ENCODE measurements at regions of chr3 and their contacts with region 1.

Region 1: GRCh38 chr3:46488735-46489361 is 8.9 kb upstream of the RTP3 start:
- DNase-seq: peak; percentile 97
- ATAC-seq: peak; percentile 99
- H3K4me3 Mint-ChIP-seq: peak overlapping the region; percentile 29
- H3K27ac Mint-ChIP-seq: peak overlapping the region; percentile 57
- H3K4me1 Mint-ChIP-seq: peaks cover 25% of the 10 kb centered on the region
- H3K27me3 Mint-ChIP-seq: peaks cover 20% of the 10 kb centered on the region

Region 2: GRCh38 chr3:46386206-46386605 is 102.6 kb before region 1 on chr3:
- CTCF ChIA-PET with region 1: interaction called, 14 read pairs
- DNase-seq: no peak
- ATAC-seq: peak; percentile 39
- H3K4me3 Mint-ChIP-seq: no peak overlapping the region
- H3K27ac Mint-ChIP-seq: no peak overlapping the region
- H3K4me1 Mint-ChIP-seq: peaks cover 36% of the 10 kb centered on the region
- H3K27me3 Mint-ChIP-seq: no peaks in the 10 kb centered on the region

Region 3: DNA sequence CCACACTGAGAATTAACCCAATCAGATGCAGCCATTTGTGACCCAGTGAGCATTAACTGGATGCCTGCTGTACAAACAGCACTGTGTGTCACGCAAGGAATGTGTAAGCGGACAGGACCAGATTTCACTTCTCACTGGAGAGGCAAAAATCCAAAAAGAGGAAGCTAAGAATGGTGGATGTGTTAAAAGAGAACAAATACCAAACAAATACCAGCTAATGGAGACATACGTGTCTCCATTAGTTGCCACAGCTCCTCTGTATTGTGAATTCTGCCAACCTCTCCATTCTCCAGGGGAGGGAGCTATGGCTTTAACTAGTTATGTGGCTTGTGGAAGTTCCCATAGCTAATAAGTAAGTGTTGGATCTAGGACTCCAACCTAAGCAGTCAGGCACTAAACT is 26.7 kb before region 1 on chr3:
- CTCF ChIA-PET with region 1: interaction called, 11 read pairs
- DNase-seq: peak; percentile 25
- ATAC-seq: no peak
- H3K4me3 Mint-ChIP-seq: no peak overlapping the region
- H3K27ac Mint-ChIP-seq: no peak overlapping the region
- H3K4me1 Mint-ChIP-seq: peaks cover 6% of the 10 kb centered on the region
- H3K27me3 Mint-ChIP-seq: peaks cover 79% of the 10 kb centered on the region

Region 4: GRCh38 chr3:46508850-46509591 is 20.2 kb after region 1 on chr3:
- CTCF ChIA-PET with region 1: interaction called, 37 read pairs
- DNase-seq: no peak
- ATAC-seq: no peak
- H3K4me3 Mint-ChIP-seq: no peak overlapping the region
- H3K27ac Mint-ChIP-seq: no peak overlapping the region
- H3K4me1 Mint-ChIP-seq: peaks cover 14% of the 10 kb centered on the region
- H3K27me3 Mint-ChIP-seq: peaks cover 22% of the 10 kb centered on the region

Region 5: DNA sequence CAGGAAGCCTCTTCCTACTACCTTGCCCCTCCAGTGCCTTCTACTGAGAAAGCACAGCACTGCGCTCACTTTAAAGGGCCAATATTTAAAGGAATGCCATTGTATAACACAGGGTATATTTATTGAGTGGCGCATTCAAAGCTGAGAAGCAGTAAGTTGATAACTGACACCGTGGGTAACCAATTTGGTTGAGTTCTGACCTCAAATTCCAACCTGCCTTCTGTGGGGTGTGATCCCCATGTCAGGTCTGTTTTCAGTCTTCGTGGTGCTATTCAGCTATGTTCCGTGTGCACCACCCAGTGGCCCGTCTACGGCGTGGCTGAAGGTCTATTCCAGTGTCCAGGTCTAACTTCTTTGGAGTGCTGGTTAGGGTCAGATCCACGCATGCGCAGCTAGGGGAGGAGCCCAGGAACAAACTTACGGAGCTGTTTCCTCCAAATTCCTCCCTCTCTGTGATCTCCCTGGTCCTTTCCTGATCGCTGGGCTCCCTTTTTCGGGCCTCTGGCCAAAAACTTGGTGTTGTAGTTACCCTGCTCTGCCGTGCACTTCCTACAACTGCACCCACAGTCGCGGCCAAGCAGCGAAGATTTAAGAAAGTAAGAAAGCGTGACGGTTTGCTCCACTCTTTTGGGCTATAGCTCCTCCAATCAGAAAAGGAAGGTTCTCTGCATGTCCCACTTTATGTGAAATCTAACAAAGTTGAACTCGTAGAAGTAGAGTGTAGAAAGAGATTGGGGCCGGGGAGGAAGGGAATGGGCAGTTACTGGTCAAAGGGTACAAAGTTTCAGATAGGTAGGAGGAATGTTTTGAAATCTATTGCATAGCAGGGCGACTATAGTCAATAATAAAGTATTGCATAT is 69.6 kb after region 1 on chr3:
- CTCF ChIA-PET with region 1: interaction called, 294 read pairs
- DNase-seq: peak; percentile 91
- ATAC-seq: peak; percentile 100
- H3K4me3 Mint-ChIP-seq: peak overlapping the region; percentile 76
- H3K27ac Mint-ChIP-seq: peak overlapping the region; percentile 63
- H3K4me1 Mint-ChIP-seq: peaks cover 23% of the 10 kb centered on the region
- H3K27me3 Mint-ChIP-seq: peaks cover 25% of the 10 kb centered on the region

Region 6: GRCh38 chr3:46585799-46586693 is 97.2 kb after region 1 on chr3:
- CTCF ChIA-PET with region 1: interaction called, 36 read pairs
- DNase-seq: no peak
- ATAC-seq: no peak
- H3K4me3 Mint-ChIP-seq: no peak overlapping the region
- H3K27ac Mint-ChIP-seq: no peak overlapping the region
- H3K4me1 Mint-ChIP-seq: no peaks in the 10 kb centered on the region
- H3K27me3 Mint-ChIP-seq: peaks cover 26% of the 10 kb centered on the region

Region 7: GRCh38 chr3:46629551-46630517 is 141.0 kb after region 1 on chr3:
- CTCF ChIA-PET with region 1: interaction called, 228 read pairs
- DNase-seq: peak; percentile 82
- ATAC-seq: peak; percentile 100
- H3K4me3 Mint-ChIP-seq: peak overlapping the region; percentile 37
- H3K27ac Mint-ChIP-seq: no peak overlapping the region
- H3K4me1 Mint-ChIP-seq: peaks cover 11% of the 10 kb centered on the region
- H3K27me3 Mint-ChIP-seq: peaks cover 10% of the 10 kb centered on the region